Caco-2 (cell line): ENCODE measurements at regions of chr17 and their contacts with region 1.

Region 1: GRCh38 chr17:2309338-2310154 is 5.8 kb downstream of the SRR start:
- DNase-seq: no peak
- H3K4me3 ChIP-seq: no peak overlapping the region
- H3K4me3 Mint-ChIP-seq: no peak overlapping the region
- H3K27ac Mint-ChIP-seq: no peak overlapping the region
- H3K4me1 ChIP-seq: no peaks in the 10 kb centered on the region
- H3K4me1 Mint-ChIP-seq: peaks cover 20% of the 10 kb centered on the region
- H3K27me3 ChIP-seq: no peaks in the 10 kb centered on the region
- H3K27me3 Mint-ChIP-seq: no peaks in the 10 kb centered on the region
- CTCF ChIP-seq: no peak

Region 2: DNA sequence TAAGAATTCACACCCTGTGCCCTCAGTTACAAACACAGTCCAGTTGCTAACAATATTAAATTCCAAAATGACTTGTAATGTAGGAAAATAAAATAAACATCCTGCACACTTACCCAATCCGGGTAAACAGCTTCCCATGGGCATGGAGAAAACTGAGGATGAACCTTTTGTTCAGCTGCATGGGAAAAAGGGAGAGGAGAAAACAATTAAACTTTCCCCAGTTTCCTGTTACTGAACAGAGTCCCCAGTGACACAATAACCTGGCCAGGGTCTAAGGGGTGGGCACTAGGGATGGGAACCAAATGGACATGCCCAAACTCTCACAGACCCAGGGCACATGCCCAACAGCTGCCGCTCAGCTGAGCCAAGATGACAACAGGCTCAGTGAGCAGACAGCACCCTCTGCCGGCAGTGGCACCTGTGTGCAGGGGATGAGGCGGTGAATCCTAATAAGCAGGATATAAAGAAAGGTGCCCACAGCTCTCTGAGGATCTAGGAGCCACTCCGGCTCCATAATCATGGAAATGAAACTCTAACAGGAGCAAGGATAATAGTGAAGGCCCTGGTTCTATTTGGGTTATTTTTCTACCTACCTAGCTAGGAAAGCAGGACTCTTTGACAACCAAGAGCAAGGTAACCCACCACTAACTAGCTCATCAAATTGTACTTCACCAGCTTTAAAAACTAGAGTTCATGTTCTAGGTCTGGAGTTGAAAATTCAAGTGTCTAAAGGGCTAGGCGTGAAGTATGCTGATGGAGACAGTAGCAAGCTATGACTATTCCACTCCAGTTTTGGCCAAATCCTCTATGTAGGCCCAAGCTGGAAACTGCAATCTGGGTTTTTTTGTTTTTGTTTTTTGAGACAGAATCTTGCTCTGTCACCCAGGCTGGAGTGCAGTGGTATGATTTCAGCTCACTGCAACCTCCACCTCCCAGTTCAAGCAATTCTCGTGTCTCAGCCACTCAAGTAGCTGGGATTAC is 64.7 kb before region 1 on chr17:
- CTCF ChIA-PET with region 1: no interaction called
- POLR2A ChIA-PET with region 1: no interaction called
- intact Hi-C with region 1: no loop called
- DNase-seq: peak; percentile 71 to 78
- H3K4me3 ChIP-seq: no peak overlapping the region
- H3K4me3 Mint-ChIP-seq: no peak overlapping the region
- H3K27ac Mint-ChIP-seq: no peak overlapping the region
- H3K4me1 ChIP-seq: no peaks in the 10 kb centered on the region
- H3K4me1 Mint-ChIP-seq: no peaks in the 10 kb centered on the region
- H3K27me3 ChIP-seq: no peaks in the 10 kb centered on the region
- H3K27me3 Mint-ChIP-seq: no peaks in the 10 kb centered on the region
- CTCF ChIP-seq: peak; percentile 93 to 96

Region 3: DNA sequence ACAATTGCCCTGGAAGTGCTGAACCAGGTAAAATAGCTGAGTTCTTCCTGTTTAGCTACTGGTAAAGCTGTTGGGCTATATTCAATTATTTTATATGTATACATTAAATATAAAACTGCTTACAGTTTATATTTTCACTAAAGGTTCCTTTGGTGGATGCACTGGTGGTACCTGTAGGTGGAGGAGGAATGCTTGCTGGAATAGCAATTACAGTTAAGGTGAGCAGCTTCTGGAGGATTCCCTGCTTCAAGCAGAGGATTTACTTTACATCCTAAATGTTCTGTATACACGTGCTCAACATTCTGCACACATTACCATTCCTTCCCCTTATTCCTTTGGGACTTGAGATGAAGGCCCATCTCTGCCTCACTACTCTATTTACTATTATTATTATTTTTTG is 11.9 kb after region 1 on chr17:
- CTCF ChIA-PET with region 1: no interaction called
- POLR2A ChIA-PET with region 1: interaction called, 10 read pairs
- intact Hi-C with region 1: no loop called
- DNase-seq: no peak
- H3K4me3 ChIP-seq: no peak overlapping the region
- H3K4me3 Mint-ChIP-seq: no peak overlapping the region
- H3K27ac Mint-ChIP-seq: no peak overlapping the region
- H3K4me1 ChIP-seq: peaks cover 15% of the 10 kb centered on the region
- H3K4me1 Mint-ChIP-seq: peaks cover 15% of the 10 kb centered on the region
- H3K27me3 ChIP-seq: no peaks in the 10 kb centered on the region
- H3K27me3 Mint-ChIP-seq: no peaks in the 10 kb centered on the region
- CTCF ChIP-seq: no peak